ENCODE measurements at regions of chr3 and their contacts with region 1.

Region 1: DNA sequence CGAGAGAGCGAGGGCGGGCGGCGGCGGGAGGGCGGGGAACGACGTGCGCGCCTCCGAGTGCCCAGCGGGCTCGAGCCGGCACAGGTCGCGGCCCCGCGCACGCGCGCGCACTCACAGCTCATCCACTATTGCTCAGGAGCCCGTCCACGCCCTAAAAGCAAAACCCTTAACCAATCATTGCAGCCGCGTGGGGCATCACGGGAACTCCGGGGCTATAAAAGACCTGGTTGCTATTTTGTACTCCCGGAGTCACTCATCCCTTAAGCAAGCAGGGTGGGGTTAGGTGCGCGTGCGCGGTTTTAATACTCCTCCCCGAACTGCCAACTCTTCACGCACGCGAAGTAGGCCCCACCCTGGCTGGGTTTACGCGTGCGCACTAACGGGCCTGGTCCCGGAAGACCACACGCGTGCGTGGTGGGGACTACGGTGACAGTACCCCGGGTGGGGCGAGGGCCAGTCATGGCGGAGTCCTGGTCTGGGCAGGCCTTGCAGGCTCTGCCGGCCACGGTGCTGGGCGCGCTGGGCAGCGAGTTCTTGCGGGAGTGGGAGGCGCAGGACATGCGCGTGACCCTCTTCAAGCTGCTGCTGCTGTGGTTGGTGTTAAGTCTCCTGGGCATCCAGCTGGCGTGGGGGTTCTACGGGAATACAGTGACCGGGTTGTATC is at the starts of genes RHOA and TCTA:
- DNase-seq: peak; percentile 100
- H3K4me3 ChIP-seq: peak within 1 kb of the TSS; percentile 72 to 97 (median 92)
- H3K27ac ChIP-seq: peak within 1 kb of the TSS; percentile 91 to 96
- H3K4me1 ChIP-seq: peaks cover 42 to 71% (median 58%) of the 10 kb centered on the region in 4 experiments
- H3K27me3 ChIP-seq: no peaks in the 10 kb centered on the region

Region 2: GRCh38 chr3:49445381-49445780 is 33.3 kb after region 1 on chr3:
- CTCF ChIA-PET with region 1: interaction called, 20 read pairs
- POLR2A ChIA-PET with region 1: no interaction called
- DNase-seq: no peak
- H3K4me3 ChIP-seq: no peak overlapping the region
- H3K27ac ChIP-seq: no peak overlapping the region
- H3K4me1 ChIP-seq: peaks cover 3 to 14% (median 13%) of the 10 kb centered on the region in 4 experiments
- H3K27me3 ChIP-seq: no peaks in the 10 kb centered on the region

Region 3: GRCh38 chr3:49454458-49454857 is 42.4 kb after region 1 on chr3:
- CTCF ChIA-PET with region 1: interaction called, 20 read pairs
- POLR2A ChIA-PET with region 1: no interaction called
- DNase-seq: no peak
- H3K4me3 ChIP-seq: no peak overlapping the region
- H3K27ac ChIP-seq: no peak overlapping the region
- H3K4me1 ChIP-seq: no peaks in the 10 kb centered on the region
- H3K27me3 ChIP-seq: peaks cover 0 to 4% (median 0%) of the 10 kb centered on the region in 5 experiments